Activated CD4-positive, alpha-beta memory T cell treated with anti-CD3 and anti-CD28 coated beads for 36 hours (primary cell): ENCODE measurements at regions of chr18 and their contacts with region 1.

Region 1: DNA sequence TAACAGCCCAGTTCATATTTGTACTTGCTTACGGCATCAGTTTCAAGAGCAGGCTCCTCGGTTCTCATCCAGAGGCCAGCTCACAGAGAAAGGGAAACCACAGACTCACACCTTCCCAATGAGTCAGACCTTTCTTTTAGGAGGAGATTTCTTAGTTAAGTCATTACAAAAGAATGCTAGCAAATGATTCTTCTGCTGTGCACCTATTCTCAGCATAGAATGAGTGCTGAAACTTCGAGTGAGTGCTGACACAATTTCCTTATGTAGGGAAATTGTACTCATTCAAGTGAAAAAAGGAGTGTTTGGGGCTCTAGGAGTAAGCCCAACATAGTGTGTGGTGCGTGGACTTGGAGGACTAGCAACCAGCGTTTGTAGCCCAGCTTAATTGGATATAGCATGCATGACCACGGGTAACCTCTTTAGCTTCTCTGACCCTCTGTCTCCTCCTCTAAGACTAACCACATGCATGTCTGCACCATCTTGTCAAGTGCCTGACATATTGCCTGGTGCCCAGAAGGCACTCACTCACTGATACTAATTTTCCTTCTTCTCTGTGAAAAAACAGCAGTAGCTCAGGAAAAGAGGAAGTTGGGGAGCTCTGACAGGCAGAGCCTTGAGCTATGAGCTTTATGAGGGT is 87.0 kb downstream of the ALPK2 start:
- DNase-seq: peak; percentile 80
- H3K4me3 Mint-ChIP-seq: no peak overlapping the region
- H3K27ac Mint-ChIP-seq: peak overlapping the region; percentile 89
- H3K4me1 Mint-ChIP-seq: peaks cover 80% of the 10 kb centered on the region
- H3K27me3 Mint-ChIP-seq: peaks cover 3% of the 10 kb centered on the region

Region 2: GRCh38 chr18:58562999-58563667 is 21.2 kb after region 1 on chr18:
- CTCF ChIA-PET with region 1: interaction called, 4 read pairs
- POLR2A ChIA-PET with region 1: interaction called, 6 read pairs
- intact Hi-C with region 1: loop called (anchors 2 kb)
- DNase-seq: no peak
- H3K4me3 Mint-ChIP-seq: no peak overlapping the region
- H3K27ac Mint-ChIP-seq: no peak overlapping the region
- H3K4me1 Mint-ChIP-seq: peaks cover 25% of the 10 kb centered on the region
- H3K27me3 Mint-ChIP-seq: no peaks in the 10 kb centered on the region

Region 3: GRCh38 chr18:58605027-58606020 is 63.4 kb after region 1 on chr18:
- CTCF ChIA-PET with region 1: interaction called, 4 read pairs
- POLR2A ChIA-PET with region 1: interaction called, 5 read pairs
- intact Hi-C with region 1: loop called (anchors 1 kb)
- DNase-seq: peak; percentile 72
- H3K4me3 Mint-ChIP-seq: no peak overlapping the region
- H3K27ac Mint-ChIP-seq: peak overlapping the region; percentile 39
- H3K4me1 Mint-ChIP-seq: peaks cover 61% of the 10 kb centered on the region
- H3K27me3 Mint-ChIP-seq: no peaks in the 10 kb centered on the region

Region 4: GRCh38 chr18:58687871-58688308 is 146.0 kb after region 1 on chr18:
- CTCF ChIA-PET with region 1: interaction called, 5 read pairs
- POLR2A ChIA-PET with region 1: interaction called, 3 read pairs
- intact Hi-C with region 1: loop called (anchors 1 kb)
- DNase-seq: peak; percentile 74
- H3K4me3 Mint-ChIP-seq: peak overlapping the region; percentile 63
- H3K27ac Mint-ChIP-seq: peak overlapping the region; percentile 84
- H3K4me1 Mint-ChIP-seq: peaks cover 64% of the 10 kb centered on the region
- H3K27me3 Mint-ChIP-seq: no peaks in the 10 kb centered on the region

Region 5: DNA sequence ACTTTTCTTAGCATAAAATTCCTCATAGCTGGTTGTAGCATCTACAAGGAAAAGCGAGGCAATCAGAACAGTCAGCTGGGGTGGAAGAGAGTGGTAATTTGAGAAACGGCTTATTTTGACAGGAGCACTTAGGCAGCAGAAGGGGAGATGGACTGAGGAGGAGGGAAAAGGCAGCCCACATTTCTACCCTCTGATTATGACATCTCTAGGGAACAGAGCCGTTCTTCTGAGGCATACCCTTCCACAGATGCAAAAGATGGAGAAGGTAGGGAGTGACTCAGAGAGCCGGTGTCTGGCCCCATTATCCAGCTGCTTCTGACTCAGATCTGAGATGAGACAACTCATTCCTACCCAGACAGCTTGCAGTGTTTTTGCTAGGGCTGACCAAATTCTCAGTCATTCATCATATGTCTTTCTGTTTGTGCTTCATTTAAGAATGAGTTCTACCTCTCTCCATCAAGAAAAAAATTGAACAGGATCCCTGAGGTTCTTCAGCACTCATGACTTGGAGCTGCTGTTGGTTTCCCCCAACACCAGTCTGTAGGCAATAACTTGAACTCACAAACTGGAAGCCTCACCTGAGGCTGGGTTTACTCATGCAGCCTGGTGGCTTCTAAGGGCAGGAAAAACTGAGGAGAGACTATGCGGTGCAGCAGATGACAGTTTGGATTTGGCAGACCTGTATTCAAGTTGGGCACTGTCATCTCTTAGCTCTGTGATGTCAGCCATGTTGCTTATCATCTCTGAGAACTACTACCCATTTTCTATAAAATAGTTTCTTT is 581.9 kb after region 1 on chr18:
- CTCF ChIA-PET with region 1: no interaction called
- POLR2A ChIA-PET with region 1: no interaction called
- intact Hi-C with region 1: loop called (anchors 5 kb)
- DNase-seq: peak; percentile 76
- H3K4me3 Mint-ChIP-seq: no peak overlapping the region
- H3K27ac Mint-ChIP-seq: peak overlapping the region; percentile 78
- H3K4me1 Mint-ChIP-seq: peaks cover 10% of the 10 kb centered on the region
- H3K27me3 Mint-ChIP-seq: peaks cover 24% of the 10 kb centered on the region

Region 6: GRCh38 chr18:59899298-59900221 is 1357.7 kb after region 1 on chr18 and contains the start of gene PMAIP1:
- CTCF ChIA-PET with region 1: no interaction called
- POLR2A ChIA-PET with region 1: no interaction called
- intact Hi-C with region 1: loop called (anchors 5 kb)
- DNase-seq: peak; percentile 94
- H3K4me3 Mint-ChIP-seq: peak within 1 kb of the TSS; percentile 96
- H3K27ac Mint-ChIP-seq: peak within 1 kb of the TSS; percentile 99
- H3K4me1 Mint-ChIP-seq: peaks cover 31% of the 10 kb centered on the region
- H3K27me3 Mint-ChIP-seq: no peaks in the 10 kb centered on the region
- total RNA-seq, gene PMAIP1: 97.6 to 104 TPM